PC-9 (cell line): ENCODE measurements at regions of chrX and their contacts with region 1.

Region 1: DNA sequence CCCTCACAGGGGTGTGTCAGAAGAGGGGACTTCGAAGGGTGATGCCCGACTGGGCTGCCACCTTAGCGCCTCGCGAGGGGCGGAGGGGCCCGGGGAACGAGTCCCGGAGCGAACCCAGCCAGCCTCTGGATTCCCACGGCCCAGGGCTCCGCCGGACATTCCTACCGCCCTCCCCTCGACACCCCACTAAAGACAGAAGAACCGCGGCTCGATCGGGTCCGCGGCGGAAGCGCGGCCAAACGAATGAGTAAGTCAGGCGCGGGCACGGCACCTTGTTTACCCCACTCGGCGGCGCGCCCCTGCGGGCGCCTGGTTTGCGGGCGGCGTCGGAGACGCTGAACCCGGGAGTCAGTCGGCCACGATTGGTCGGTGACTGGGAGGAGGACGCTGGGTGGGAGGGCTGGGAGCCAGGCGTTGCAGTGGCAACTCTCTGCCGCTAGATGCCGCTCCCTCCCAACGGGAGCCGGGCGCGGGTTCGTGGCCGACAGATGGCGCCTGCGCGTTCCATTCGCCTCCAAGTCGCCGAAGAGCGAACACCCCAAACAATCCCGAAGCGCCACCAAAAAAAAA is 1.4 kb upstream of the STAG2 start:
- DNase-seq: peak; percentile 85 to 94
- H3K4me3 ChIP-seq: peak overlapping the region; percentile 79
- H3K27ac ChIP-seq: peak overlapping the region; percentile 95
- H3K4me1 ChIP-seq: peaks cover 29% of the 10 kb centered on the region
- H3K27me3 ChIP-seq: no peaks in the 10 kb centered on the region
- CTCF ChIP-seq: peak; percentile 89

Region 2: GRCh38 chrX:123731987-123732669 is 228.0 kb before region 1 on chrX:
- CTCF ChIA-PET with region 1: interaction called, 6 read pairs
- POLR2A ChIA-PET with region 1: no interaction called
- intact Hi-C with region 1: loop called (anchors 2 kb)
- DNase-seq: peak in 1 of 2 experiments; percentile 19
- H3K4me3 ChIP-seq: peak overlapping the region; percentile 81
- H3K27ac ChIP-seq: peak overlapping the region; percentile 48
- H3K4me1 ChIP-seq: peaks cover 29% of the 10 kb centered on the region
- H3K27me3 ChIP-seq: no peaks in the 10 kb centered on the region
- CTCF ChIP-seq: no peak

Region 3: DNA sequence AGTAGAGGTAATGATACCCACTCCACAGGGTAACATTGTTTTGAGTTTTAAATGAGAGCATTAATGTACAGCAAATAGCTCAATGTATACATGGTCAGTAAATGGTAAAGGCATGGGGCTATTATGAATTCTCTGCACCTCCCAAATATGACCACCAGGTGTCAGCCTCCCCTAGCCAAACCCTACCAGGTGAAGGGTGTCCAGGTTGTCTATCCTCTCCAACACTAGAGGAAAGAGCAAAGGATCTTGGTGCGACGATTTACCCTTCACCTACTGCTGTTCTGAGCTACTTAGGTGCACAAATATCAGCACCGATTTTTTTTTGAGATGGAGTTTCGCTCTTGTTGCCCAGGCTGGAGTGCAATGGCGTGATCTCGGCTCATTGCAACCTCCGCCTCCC is 126.7 kb before region 1 on chrX:
- CTCF ChIA-PET with region 1: interaction called, 5 read pairs
- POLR2A ChIA-PET with region 1: no interaction called
- intact Hi-C with region 1: loop called (anchors 2 kb)
- DNase-seq: peak; percentile 62 to 68
- H3K4me3 ChIP-seq: no peak overlapping the region
- H3K27ac ChIP-seq: no peak overlapping the region
- H3K4me1 ChIP-seq: peaks cover 22% of the 10 kb centered on the region
- H3K27me3 ChIP-seq: no peaks in the 10 kb centered on the region
- CTCF ChIP-seq: peak; percentile 92

Region 4: GRCh38 chrX:123846598-123847455 is 113.3 kb before region 1 on chrX:
- CTCF ChIA-PET with region 1: no interaction called
- POLR2A ChIA-PET with region 1: no interaction called
- intact Hi-C with region 1: no loop called
- DNase-seq: no peak
- H3K4me3 ChIP-seq: no peak overlapping the region
- H3K27ac ChIP-seq: no peak overlapping the region
- H3K4me1 ChIP-seq: 0 out of 2 replicates have a peak, but pooled peaks cover 4% of the 10 kb centered on the region
- H3K27me3 ChIP-seq: no peaks in the 10 kb centered on the region
- CTCF ChIP-seq: no peak

Region 5: GRCh38 chrX:124005228-124005627 is 45.1 kb after region 1 on chrX:
- CTCF ChIA-PET with region 1: no interaction called
- POLR2A ChIA-PET with region 1: no interaction called
- intact Hi-C with region 1: no loop called
- DNase-seq: no peak
- H3K4me3 ChIP-seq: no peak overlapping the region
- H3K27ac ChIP-seq: no peak overlapping the region
- H3K4me1 ChIP-seq: no peaks in the 10 kb centered on the region
- H3K27me3 ChIP-seq: no peaks in the 10 kb centered on the region
- CTCF ChIP-seq: no peak

Region 6: GRCh38 chrX:124018023-124018422 is 57.9 kb after region 1 on chrX:
- CTCF ChIA-PET with region 1: no interaction called
- POLR2A ChIA-PET with region 1: no interaction called
- intact Hi-C with region 1: loop called (anchors 5 kb)
- DNase-seq: no peak
- H3K4me3 ChIP-seq: no peak overlapping the region
- H3K27ac ChIP-seq: no peak overlapping the region
- H3K4me1 ChIP-seq: no peaks in the 10 kb centered on the region
- H3K27me3 ChIP-seq: no peaks in the 10 kb centered on the region
- CTCF ChIP-seq: no peak; the same call in 1 of the 2 replicates

Region 7: DNA sequence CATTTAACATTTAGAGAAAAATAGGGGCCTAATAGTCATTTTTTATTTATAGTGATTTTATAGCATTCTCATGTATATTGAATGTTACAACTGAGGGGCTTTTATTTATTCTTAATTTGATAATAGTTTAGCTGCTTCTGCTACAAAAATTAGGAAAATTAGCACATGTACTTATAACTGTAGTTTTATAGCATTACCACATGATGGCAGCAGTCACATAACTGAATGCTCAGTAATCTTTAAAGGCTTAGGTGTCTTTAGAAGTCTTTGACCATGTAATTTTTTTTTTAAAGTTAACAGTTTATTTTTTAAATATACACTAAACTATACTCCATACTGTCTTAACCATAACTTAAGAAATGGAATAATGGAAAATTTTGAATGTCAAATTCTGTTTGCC is 138.0 kb after region 1 on chrX:
- CTCF ChIA-PET with region 1: no interaction called
- POLR2A ChIA-PET with region 1: no interaction called
- intact Hi-C with region 1: loop called (anchors 10 kb)
- DNase-seq: no peak
- H3K4me3 ChIP-seq: no peak overlapping the region
- H3K27ac ChIP-seq: no peak overlapping the region
- H3K4me1 ChIP-seq: no peaks in the 10 kb centered on the region
- H3K27me3 ChIP-seq: no peaks in the 10 kb centered on the region
- CTCF ChIP-seq: peak; percentile 72

Region 8: GRCh38 chrX:124504111-124504983 is 544.2 kb after region 1 on chrX:
- CTCF ChIA-PET with region 1: no interaction called
- POLR2A ChIA-PET with region 1: no interaction called
- intact Hi-C with region 1: no loop called
- DNase-seq: no peak
- H3K4me3 ChIP-seq: no peak overlapping the region
- H3K27ac ChIP-seq: no peak overlapping the region
- H3K4me1 ChIP-seq: no peaks in the 10 kb centered on the region
- H3K27me3 ChIP-seq: no peaks in the 10 kb centered on the region
- CTCF ChIP-seq: no peak

Region 9: DNA sequence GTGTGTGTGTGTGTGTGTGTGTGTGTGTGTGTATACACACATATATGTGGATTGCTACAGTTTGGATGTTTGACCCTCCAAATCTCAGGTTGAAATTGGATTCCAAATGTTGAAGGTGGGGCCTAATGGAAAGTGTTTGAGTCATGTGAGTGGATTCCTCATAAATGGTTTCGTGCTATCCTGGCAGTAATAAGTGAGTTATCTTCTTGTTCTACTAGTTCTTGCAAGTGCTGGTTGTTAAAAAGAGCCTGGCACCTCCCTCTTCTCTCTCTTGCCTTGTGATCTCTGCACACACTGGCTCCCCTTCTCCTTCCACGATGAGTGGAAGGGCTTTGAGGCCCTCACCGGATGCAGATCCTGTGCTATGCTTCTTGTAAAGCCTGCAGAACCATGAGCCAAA is 730.4 kb after region 1 on chrX:
- CTCF ChIA-PET with region 1: interaction called, 12 read pairs
- POLR2A ChIA-PET with region 1: no interaction called
- intact Hi-C with region 1: no loop called
- DNase-seq: no peak
- H3K4me3 ChIP-seq: no peak overlapping the region
- H3K27ac ChIP-seq: no peak overlapping the region
- H3K4me1 ChIP-seq: no peaks in the 10 kb centered on the region
- H3K27me3 ChIP-seq: no peaks in the 10 kb centered on the region
- CTCF ChIP-seq: no peak